ENCODE measurements at regions of chr7 and their contacts with region 1.

Region 1: DNA sequence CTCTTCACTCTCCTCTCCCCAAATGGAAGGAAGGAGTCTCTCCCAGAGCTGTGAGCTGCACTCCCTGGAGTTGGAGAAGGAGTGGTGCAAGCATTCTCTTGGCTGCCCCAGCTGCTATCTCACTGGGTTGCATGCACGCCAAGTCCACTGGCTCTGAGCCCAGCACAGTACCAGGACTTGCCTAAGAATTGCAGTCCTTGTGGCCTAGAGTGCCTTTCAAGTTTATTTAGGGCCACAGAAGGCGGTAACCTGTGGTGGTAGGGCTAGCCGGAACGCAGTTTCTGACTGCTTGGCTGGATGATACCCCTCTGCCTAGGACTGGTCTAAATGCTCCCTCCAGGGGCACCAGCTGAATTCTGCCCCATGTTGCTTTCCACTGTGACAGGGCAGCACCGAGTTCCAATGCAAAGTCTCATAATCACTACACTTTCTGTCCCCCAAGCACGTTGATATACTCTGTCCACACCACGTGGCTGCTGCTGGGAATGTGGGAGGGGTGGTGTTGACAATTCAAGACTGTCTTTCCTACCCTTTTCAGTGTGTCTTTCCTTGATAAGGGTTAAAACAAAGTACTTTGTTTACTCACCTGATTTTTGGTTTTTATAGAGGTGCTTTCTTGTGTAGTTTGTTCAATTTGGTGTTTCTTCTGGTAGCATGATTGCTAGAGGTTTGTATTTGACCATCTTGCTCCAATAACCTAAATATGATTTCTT is 57.0 kb downstream of the PHTF2 start:
- DNase-seq: no peak
- H3K4me3 ChIP-seq: no peak overlapping the region
- H3K27ac ChIP-seq: no peak overlapping the region
- H3K4me1 ChIP-seq: peaks cover 6% of the 10 kb centered on the region
- H3K27me3 ChIP-seq: no peaks in the 10 kb centered on the region
- CTCF ChIP-seq: no peak
- POLR2A ChIP-seq: no peak

Region 2: GRCh38 chr7:77587272-77587671 is 268.3 kb before region 1 on chr7:
- intact Hi-C with region 1: no loop called
- DNase-seq: no peak
- H3K4me3 ChIP-seq: no peak overlapping the region
- H3K27ac ChIP-seq: peak overlapping the region; percentile 18
- H3K4me1 ChIP-seq: peaks cover 20% of the 10 kb centered on the region
- H3K27me3 ChIP-seq: no peaks in the 10 kb centered on the region
- CTCF ChIP-seq: no peak
- POLR2A ChIP-seq: no peak

Region 3: GRCh38 chr7:77813180-77813579 is 42.3 kb before region 1 on chr7:
- intact Hi-C with region 1: loop called (anchors 1 kb)
- DNase-seq: no peak
- H3K4me3 ChIP-seq: no peak overlapping the region
- H3K27ac ChIP-seq: no peak overlapping the region
- H3K4me1 ChIP-seq: no peaks in the 10 kb centered on the region
- H3K27me3 ChIP-seq: no peaks in the 10 kb centered on the region
- CTCF ChIP-seq: no peak
- POLR2A ChIP-seq: no peak

Region 4: DNA sequence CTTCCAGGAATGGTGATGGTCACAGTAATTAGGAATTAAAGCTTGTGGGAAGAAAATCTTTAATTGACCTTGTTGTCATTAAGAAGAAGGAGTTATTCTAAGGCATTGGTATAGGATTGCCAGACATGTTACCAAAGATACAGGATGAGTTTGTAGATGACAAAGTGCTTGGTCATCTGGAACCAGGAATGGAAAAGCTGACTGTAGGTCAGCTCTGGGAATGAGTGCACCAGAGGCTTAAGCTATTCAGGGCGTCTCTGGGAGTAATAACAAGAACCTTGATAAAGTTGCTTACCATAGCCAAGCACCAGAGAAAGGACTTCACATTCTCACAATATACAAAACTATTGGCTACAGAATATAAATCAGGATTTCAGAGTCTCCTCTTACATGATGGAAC is 32.0 kb after region 1 on chr7:
- intact Hi-C with region 1: loop called (anchors 2 kb)
- DNase-seq: no peak
- H3K4me3 ChIP-seq: no peak overlapping the region
- H3K27ac ChIP-seq: no peak overlapping the region
- H3K4me1 ChIP-seq: no peaks in the 10 kb centered on the region
- H3K27me3 ChIP-seq: no peaks in the 10 kb centered on the region
- CTCF ChIP-seq: no peak
- POLR2A ChIP-seq: no peak